ENCODE measurements at regions of chr9 and their contacts with region 1.

Region 1: DNA sequence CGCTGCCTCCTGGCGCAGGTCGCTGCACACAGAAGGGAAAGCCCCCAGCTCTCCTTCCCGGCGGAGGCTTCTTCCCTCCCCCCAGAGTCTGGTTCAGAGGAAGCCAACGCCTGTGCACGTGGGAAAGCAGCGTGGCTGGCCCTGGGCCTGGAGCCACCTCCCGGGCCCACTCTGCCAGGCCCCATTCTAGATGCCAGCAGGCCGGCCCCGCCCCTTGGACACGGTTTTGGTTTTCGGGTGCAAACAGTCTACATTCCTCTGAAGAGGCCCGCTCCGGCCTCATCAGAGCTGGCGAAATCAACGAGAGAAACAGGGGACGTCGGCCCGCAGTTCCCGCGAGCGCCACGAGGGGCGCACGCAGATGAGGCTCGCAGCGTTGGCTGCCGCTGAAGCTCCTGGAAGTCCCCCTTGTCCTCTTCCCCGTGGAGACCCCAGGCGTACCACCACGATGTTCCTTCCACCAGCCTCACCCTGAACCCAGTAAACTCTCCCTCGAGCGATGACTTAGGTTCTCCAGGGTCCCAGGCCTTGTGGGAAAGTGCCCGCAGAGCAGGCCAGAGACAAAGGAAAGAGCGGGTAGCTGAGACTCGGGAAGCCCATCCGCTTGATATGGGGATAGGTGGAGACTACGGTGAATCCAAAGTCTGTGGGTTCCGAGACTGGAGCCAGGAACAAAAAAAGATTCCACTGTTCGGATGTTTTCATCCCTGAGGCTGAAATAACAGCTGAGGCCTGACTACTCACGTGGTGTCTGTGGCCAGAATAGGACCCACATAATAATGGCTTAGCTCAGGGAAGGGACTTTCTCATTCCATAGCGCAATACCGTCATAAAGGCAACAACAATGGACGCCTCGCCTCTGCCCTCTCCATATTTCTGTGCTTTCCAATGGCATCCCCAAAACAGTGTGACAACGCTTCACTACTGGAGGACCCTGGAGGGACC is 64.2 kb downstream of the KLF4 start:
- DNase-seq: peak; percentile 50
- ATAC-seq: peak; percentile 75
- H3K4me3 ChIP-seq: peak overlapping the region in 1 of 2 experiments; percentile 11; a peak in 1 of 4 replicates
- H3K27ac ChIP-seq: peak overlapping the region; percentile 34
- H3K4me1 ChIP-seq: peaks cover 8 to 19% of the 10 kb centered on the region in 2 experiments; a peak in 3 of 4 replicates
- H3K27me3 ChIP-seq: no peaks in the 10 kb centered on the region
- CTCF ChIP-seq: peak; percentile 54 to 97 (median 97); a peak in 5 of 6 replicates
- POLR2A ChIP-seq: no peak
- RAD21 ChIP-seq: peak; percentile 74

Region 2: GRCh38 chr9:107190061-107190935 is 235.1 kb before region 1 on chr9:
- CTCF ChIA-PET with region 1: no interaction called
- POLR2A ChIA-PET with region 1: no interaction called
- RAD21 ChIA-PET with region 1: no interaction called
- intact Hi-C with region 1: no loop called
- DNase-seq: no peak
- ATAC-seq: peak; percentile 68
- H3K4me3 ChIP-seq: peak overlapping the region in 1 of 2 experiments; percentile 25; a peak in 2 of 4 replicates
- H3K27ac ChIP-seq: peak overlapping the region; percentile 11
- H3K4me1 ChIP-seq: peaks cover 7 to 32% of the 10 kb centered on the region in 2 experiments; a peak in 3 of 4 replicates
- H3K27me3 ChIP-seq: no peaks in the 10 kb centered on the region
- CTCF ChIP-seq: no peak
- POLR2A ChIP-seq: no peak
- RAD21 ChIP-seq: no peak

Region 3: DNA sequence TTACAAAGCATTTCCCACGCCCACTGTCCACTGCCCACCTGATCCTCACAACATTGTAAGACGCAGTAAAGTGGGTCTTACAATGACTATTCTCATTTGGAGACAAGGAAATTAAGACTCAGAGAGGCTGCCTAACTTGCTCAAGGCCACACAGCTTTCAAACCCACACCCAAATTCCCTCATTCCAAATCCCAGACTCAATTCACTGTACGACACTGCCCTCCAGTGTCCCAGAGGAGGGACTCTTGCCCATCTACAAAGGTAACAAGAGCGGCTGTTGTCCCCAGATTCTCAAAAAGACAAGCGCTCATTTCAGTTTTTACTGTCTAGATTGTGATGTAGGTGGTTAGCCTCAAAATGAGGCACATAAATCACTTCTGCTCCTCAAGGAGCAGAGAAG is 1245.8 kb after region 1 on chr9:
- CTCF ChIA-PET with region 1: no interaction called
- POLR2A ChIA-PET with region 1: no interaction called
- RAD21 ChIA-PET with region 1: interaction called in 1 of 2 experiments, 3 read pairs
- intact Hi-C with region 1: loop called (anchors 2 kb)
- DNase-seq: peak; percentile 33
- ATAC-seq: peak; percentile 80
- H3K4me3 ChIP-seq: no peak overlapping the region
- H3K27ac ChIP-seq: no peak overlapping the region
- H3K4me1 ChIP-seq: peaks cover 0 to 6% of the 10 kb centered on the region in 2 experiments; a peak in 1 of 4 replicates
- H3K27me3 ChIP-seq: no peaks in the 10 kb centered on the region
- CTCF ChIP-seq: peak; percentile 46 to 60 (median 48); a peak in 5 of 6 replicates
- POLR2A ChIP-seq: no peak
- RAD21 ChIP-seq: peak; percentile 90

Region 4: GRCh38 chr9:108761655-108762347 is 1336.4 kb after region 1 on chr9:
- CTCF ChIA-PET with region 1: interaction called, 9 read pairs
- POLR2A ChIA-PET with region 1: no interaction called
- RAD21 ChIA-PET with region 1: no interaction called
- intact Hi-C with region 1: loop called (anchors 1 kb)
- DNase-seq: peak; percentile 33
- ATAC-seq: peak; percentile 95
- H3K4me3 ChIP-seq: no peak overlapping the region
- H3K27ac ChIP-seq: no peak overlapping the region
- H3K4me1 ChIP-seq: no peaks in the 10 kb centered on the region
- H3K27me3 ChIP-seq: no peaks in the 10 kb centered on the region
- CTCF ChIP-seq: peak; percentile 70 to 93 (median 80); a peak in 5 of 6 replicates
- POLR2A ChIP-seq: no peak
- RAD21 ChIP-seq: peak; percentile 94

Region 5: DNA sequence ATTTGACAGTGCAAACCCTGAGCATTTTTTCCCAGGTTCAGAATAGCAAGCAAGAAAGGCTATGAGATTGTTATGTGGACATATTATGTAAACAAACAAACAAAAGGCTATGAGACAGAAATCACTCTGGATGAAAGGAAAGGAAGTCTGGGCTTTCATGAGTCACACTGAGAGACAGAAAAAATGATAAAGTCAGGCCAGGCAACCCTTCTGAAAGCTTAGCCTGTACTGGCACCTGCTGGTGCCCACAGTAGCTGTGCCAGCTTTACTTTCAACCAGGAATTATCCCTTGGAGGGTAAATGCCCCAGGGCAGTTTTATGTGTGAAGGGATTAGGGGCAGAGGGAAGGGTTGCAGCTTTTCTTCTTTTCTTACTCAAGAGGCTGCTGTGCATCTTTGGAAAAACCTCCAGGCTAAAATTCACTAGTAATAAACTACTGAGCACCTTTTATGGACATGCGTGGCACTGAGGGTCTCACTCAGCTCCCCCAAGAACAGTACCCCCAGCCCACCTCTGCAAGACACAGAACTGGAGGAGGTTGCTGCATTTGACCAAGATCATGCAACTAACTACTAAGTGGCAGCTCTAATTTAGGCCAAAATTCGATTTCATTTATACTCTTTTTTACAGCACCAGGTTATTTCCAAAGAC is 1388.7 kb after region 1 on chr9:
- CTCF ChIA-PET with region 1: interaction called, 8 read pairs
- POLR2A ChIA-PET with region 1: no interaction called
- RAD21 ChIA-PET with region 1: no interaction called
- intact Hi-C with region 1: loop called (anchors 10 kb)
- DNase-seq: peak; percentile 38
- ATAC-seq: peak; percentile 79
- H3K4me3 ChIP-seq: no peak overlapping the region
- H3K27ac ChIP-seq: no peak overlapping the region
- H3K4me1 ChIP-seq: peaks cover 3 to 23% of the 10 kb centered on the region in 2 experiments; a peak in 3 of 4 replicates
- H3K27me3 ChIP-seq: no peaks in the 10 kb centered on the region
- CTCF ChIP-seq: peak; percentile 61 to 78 (median 68); a peak in 5 of 6 replicates
- POLR2A ChIP-seq: no peak
- RAD21 ChIP-seq: peak; percentile 94